Posterior vena cava (tissue), 2 donors: ENCODE measurements at regions of chr2 and their contacts with region 1.

Region 1: GRCh38 chr2:235779444-235779896 is 285.6 kb downstream of the AGAP1 start:
- DNase-seq: peak; percentile 89

Region 2: DNA sequence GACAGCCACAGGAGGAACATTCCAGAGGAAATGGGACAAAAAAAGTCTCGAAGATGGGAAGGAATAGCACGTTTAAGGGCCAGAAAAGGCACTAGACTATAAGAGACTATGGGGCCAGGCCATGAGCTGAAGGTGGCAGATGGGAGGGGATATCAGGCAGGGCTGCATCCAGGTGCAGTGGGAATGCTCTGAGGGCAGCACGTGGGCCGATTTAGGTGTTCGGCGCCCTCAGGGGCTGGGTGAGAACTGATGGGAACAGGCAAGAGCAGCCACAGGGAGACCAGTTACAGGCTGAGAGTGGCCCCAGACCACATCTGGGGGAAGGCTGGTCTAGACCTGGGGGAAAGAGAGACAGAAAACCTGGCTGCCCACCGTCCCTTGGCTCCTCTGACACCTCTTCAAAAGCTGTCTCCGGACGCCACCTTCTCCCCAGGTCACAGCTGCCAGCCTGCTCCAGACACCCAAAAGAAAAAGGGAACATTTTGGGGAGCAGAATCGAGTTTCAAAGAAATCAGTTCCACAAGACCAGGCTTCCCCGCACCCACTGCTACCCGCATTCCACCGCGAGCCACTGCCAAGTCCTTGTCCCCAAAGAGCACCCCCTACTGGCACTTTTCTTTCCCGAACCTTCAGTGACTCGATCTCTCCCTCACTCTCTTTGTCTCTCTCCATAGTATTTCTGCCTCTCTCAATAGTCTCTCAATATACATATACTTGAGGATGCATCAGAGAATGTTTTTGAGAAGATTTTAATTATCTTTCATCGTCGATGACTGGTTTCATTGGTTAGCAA is 475.8 kb before region 1 on chr2:
- intact Hi-C with region 1: no loop called
- DNase-seq: no peak

Region 3: GRCh38 chr2:235799281-235799680 is 19.8 kb after region 1 on chr2:
- intact Hi-C with region 1: loop called in 1 of 2 experiments (anchors 1 kb)
- DNase-seq: no peak